CD8-positive, alpha-beta T cell (primary cell): ENCODE measurements at regions of chr14 and their contacts with region 1.

Region 1: DNA sequence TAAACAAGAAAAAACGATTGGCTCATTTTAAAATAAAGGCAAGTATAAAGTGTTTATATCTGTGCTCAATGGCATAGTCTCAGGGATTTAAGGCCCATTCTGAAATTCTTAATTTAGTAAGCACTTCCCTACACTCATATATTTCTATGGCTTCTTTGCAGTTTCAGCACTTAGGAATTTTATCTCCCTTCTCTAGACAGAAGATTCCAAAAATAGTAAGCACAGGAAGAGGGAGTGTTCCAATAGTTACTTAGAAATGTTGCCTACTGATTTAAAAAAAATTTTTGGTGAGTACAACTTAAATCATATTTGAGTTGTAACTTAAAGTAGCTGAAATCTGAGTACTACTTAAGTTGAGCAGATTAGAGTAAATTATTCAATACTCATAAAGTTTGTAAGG is 19.8 kb downstream of the INSM2 start:
- DNase-seq: no peak
- ATAC-seq: no peak
- H3K4me3 ChIP-seq: no peak overlapping the region
- H3K4me3 Mint-ChIP-seq: no peak overlapping the region
- H3K27ac ChIP-seq: no peak overlapping the region
- H3K27ac Mint-ChIP-seq: no peak overlapping the region
- H3K4me1 ChIP-seq: no peaks in the 10 kb centered on the region
- H3K4me1 Mint-ChIP-seq: no peaks in the 10 kb centered on the region
- H3K27me3 ChIP-seq: no peaks in the 10 kb centered on the region
- H3K27me3 Mint-ChIP-seq: no peaks in the 10 kb centered on the region
- CTCF ChIP-seq: no peak

Region 2: DNA sequence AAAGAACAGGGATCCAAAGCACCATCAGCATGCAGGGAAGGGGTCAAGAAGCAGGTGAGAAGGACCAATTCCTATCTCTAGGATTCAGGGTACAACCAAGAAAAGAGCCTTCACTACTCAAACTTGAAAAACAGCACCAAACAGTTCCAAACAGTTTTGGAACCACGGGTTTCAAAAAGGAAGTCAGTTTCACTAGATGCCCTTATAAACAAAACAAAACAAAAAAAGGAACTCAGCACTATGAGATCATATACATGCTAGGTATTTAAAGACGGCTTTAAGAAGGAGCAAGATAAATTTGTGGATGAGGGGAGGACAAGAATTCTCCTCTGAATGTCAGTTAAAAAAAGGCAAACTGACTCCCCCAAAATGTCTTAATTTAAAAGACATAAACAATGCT is 13.8 kb before region 1 on chr14:
- CTCF ChIA-PET with region 1: no interaction called
- POLR2A ChIA-PET with region 1: no interaction called
- intact Hi-C with region 1: loop called in 1 of 2 experiments (anchors 1 kb)
- DNase-seq: no peak
- ATAC-seq: no peak
- H3K4me3 ChIP-seq: no peak overlapping the region
- H3K4me3 Mint-ChIP-seq: no peak overlapping the region
- H3K27ac ChIP-seq: no peak overlapping the region
- H3K27ac Mint-ChIP-seq: no peak overlapping the region
- H3K4me1 ChIP-seq: peaks cover 9% of the 10 kb centered on the region
- H3K4me1 Mint-ChIP-seq: peaks cover 9% of the 10 kb centered on the region
- H3K27me3 ChIP-seq: peaks cover 2 to 9% of the 10 kb centered on the region in 2 experiments
- H3K27me3 Mint-ChIP-seq: peaks cover 13% of the 10 kb centered on the region
- CTCF ChIP-seq: no peak